Gastrocnemius medialis (tissue), 4 donors: ENCODE measurements at regions of chr19 and their contacts with region 1.

Region 1: GRCh38 chr19:3360421-3361383 is 5.7 kb upstream of the NFIC start:
- DNase-seq: peak; percentile 75 to 86
- ATAC-seq: peak; percentile 50 to 52
- H3K4me3 ChIP-seq: peak overlapping the region; percentile 71 to 90 (median 84)
- H3K27ac ChIP-seq: peak overlapping the region; percentile 92 to 99 (median 98)
- H3K4me1 ChIP-seq: peaks cover 27 to 28% of the 10 kb centered on the region in 2 donors
- H3K27me3 ChIP-seq: no peaks in the 10 kb centered on the region
- CTCF ChIP-seq: peak in 3 of 5 experiments; percentile 27 to 40 (median 36)
- POLR2A ChIP-seq: peak; percentile 84 to 90

Region 2: GRCh38 chr19:3336680-3337523 is 23.8 kb before region 1 on chr19:
- in situ Hi-C with region 1: no loop called
- intact Hi-C with region 1: loop called (anchors 2 kb)
- DNase-seq: peak; percentile 84 to 94
- ATAC-seq: peak; percentile 85 to 86
- H3K4me3 ChIP-seq: peak overlapping the region in 2 of 4 donors; percentile 1 to 25
- H3K27ac ChIP-seq: peak overlapping the region; percentile 92 to 97 (median 95)
- H3K4me1 ChIP-seq: peaks cover 38 to 39% of the 10 kb centered on the region in 2 donors
- H3K27me3 ChIP-seq: no peaks in the 10 kb centered on the region
- CTCF ChIP-seq: no peak
- POLR2A ChIP-seq: peak; percentile 14 to 43